MCF 10A (cell line): ENCODE measurements at regions of chr7 and their contacts with region 1.

Region 1: DNA sequence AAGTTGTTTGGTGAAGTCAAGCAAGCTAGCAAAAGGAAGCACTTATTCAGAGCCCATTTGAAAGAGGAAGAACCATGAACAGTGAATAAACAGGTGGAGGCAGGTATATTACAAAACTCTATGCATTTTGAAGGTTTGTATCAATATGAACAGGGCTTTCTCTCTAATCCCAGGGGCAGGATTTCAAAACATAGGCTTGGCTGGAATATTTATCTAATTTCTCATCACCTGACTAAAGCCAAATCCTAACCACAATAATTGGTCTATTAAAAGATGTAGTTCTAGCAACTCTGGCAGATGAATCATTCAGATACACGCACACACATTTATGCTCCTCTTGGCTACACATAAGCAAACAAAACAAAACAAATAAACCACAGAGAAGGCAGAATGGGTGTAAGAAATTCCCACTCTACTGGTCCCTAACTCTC is 554.4 kb downstream of the INHBA start:
- DNase-seq: peak; percentile 94
- H3K4me3 Mint-ChIP-seq: no peak overlapping the region
- H3K27ac Mint-ChIP-seq: peak overlapping the region; percentile 99
- H3K4me1 Mint-ChIP-seq: peaks cover 35% of the 10 kb centered on the region
- H3K27me3 Mint-ChIP-seq: no peaks in the 10 kb centered on the region
- CTCF ChIP-seq: no peak

Region 2: DNA sequence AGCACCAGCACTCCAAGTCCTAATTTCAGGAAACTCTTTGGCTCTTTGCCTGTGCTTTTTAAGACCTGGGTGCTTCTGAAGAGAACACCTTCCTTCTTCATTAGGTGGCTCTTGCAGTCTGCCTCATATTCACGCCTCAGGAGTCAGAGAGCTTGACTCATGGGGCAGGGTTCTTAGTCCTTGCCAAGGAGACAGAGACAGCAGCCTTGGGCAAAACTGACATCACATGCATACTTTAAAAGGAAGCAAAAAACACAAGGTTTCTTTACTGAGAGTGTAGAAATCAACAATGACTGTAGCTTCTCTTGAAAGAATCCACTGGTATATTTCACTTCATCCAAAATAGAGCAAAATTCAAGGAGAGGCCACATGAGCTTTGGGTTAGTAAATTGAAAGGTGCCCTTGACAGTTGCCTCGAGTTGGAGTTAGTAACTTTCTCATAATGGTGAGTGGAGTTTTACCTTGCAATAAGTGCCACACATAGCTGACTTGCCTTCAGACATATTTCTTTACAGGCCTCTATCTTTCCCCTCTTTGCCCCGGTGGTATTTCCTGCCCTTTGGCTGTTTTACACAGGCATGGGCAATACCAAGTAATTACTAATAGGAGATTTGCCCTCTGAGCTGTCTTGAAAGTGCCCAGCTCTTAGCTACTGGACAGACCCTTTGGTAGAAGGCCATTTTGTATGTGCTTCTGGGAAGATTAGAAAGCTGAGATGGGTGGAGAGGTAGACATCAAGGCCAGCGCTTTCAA is 226.0 kb before region 1 on chr7:
- CTCF ChIA-PET with region 1: no interaction called
- POLR2A ChIA-PET with region 1: interaction called, 5 read pairs
- intact Hi-C with region 1: loop called (anchors 1 kb)
- DNase-seq: peak; percentile 95
- H3K4me3 Mint-ChIP-seq: no peak overlapping the region
- H3K27ac Mint-ChIP-seq: peak overlapping the region; percentile 92
- H3K4me1 Mint-ChIP-seq: peaks cover 51% of the 10 kb centered on the region
- H3K27me3 Mint-ChIP-seq: no peaks in the 10 kb centered on the region
- CTCF ChIP-seq: no peak

Region 3: GRCh38 chr7:41003031-41003925 is 145.3 kb before region 1 on chr7:
- CTCF ChIA-PET with region 1: interaction called, 5 read pairs
- POLR2A ChIA-PET with region 1: interaction called, 9 read pairs
- intact Hi-C with region 1: loop called (anchors 10 kb)
- DNase-seq: peak; percentile 64
- H3K4me3 Mint-ChIP-seq: no peak overlapping the region
- H3K27ac Mint-ChIP-seq: peak overlapping the region; percentile 25
- H3K4me1 Mint-ChIP-seq: peaks cover 42% of the 10 kb centered on the region
- H3K27me3 Mint-ChIP-seq: no peaks in the 10 kb centered on the region
- CTCF ChIP-seq: peak; percentile 73

Region 4: GRCh38 chr7:41107668-41108448 is 40.7 kb before region 1 on chr7:
- CTCF ChIA-PET with region 1: no interaction called
- POLR2A ChIA-PET with region 1: interaction called, 10 read pairs
- intact Hi-C with region 1: loop called (anchors 1 kb)
- DNase-seq: peak; percentile 93
- H3K4me3 Mint-ChIP-seq: peak overlapping the region; percentile 48
- H3K27ac Mint-ChIP-seq: peak overlapping the region; percentile 52
- H3K4me1 Mint-ChIP-seq: peaks cover 45% of the 10 kb centered on the region
- H3K27me3 Mint-ChIP-seq: no peaks in the 10 kb centered on the region
- CTCF ChIP-seq: no peak

Region 5: GRCh38 chr7:41205600-41205999 is 57.1 kb after region 1 on chr7:
- CTCF ChIA-PET with region 1: no interaction called
- POLR2A ChIA-PET with region 1: no interaction called
- intact Hi-C with region 1: no loop called
- DNase-seq: no peak
- H3K4me3 Mint-ChIP-seq: no peak overlapping the region
- H3K27ac Mint-ChIP-seq: no peak overlapping the region
- H3K4me1 Mint-ChIP-seq: no peaks in the 10 kb centered on the region
- H3K27me3 Mint-ChIP-seq: no peaks in the 10 kb centered on the region
- CTCF ChIP-seq: no peak

Region 6: DNA sequence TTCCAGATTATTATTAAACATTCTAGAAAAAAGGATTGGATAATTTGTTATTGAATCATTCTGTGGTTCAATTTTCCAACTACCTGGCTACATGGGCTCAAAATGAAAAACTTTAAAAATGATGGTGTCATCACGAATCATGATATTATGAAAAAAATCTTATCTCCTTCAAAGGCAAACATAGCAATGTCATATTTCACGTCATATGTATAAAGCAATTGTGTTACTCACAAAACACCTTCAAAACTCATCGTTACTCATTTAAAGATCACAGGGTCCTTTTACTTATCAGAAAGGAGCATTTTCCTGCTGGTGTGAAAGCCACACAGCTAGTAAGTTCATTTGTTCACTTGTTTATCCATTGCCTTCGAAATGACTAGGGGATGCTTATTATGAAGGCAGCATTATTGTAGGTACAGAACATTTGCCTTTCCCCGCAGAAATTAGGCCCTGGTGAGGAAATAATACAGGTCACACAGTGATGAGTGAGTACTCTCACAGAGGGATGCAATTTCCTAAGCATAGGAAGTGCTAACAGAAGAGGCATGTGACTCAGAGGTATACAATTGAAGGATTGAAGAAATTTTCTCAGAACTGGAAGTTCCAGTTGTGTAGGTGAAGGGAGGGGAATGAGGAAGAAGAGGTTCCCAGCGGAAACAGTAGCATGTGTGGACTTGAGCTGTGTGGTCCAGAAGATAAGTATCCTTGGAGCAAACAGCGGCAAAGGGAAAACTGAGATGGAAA is 75.7 kb after region 1 on chr7:
- CTCF ChIA-PET with region 1: no interaction called
- POLR2A ChIA-PET with region 1: interaction called, 3 read pairs
- intact Hi-C with region 1: loop called (anchors 2 kb)
- DNase-seq: peak; percentile 80
- H3K4me3 Mint-ChIP-seq: no peak overlapping the region
- H3K27ac Mint-ChIP-seq: no peak overlapping the region
- H3K4me1 Mint-ChIP-seq: peaks cover 15% of the 10 kb centered on the region
- H3K27me3 Mint-ChIP-seq: no peaks in the 10 kb centered on the region
- CTCF ChIP-seq: no peak

Region 7: DNA sequence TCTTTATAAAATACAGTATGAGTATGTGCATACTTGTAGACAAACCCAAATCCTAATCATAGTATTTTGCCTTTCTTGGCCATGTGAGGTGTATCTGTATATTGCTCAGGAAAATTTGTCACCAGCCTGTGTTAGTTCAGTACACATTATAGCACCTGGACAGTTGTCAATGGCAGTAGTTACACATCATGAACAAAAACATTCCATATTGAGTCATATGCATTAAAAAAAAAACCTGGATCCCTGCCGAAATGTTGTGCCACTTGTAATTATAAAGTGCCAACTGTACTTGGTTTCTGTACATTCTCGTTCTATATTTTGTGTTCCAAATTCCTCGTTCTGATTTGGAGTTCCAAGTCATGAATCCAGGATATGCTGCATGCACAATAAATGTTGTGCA is 144.0 kb after region 1 on chr7:
- CTCF ChIA-PET with region 1: no interaction called
- POLR2A ChIA-PET with region 1: no interaction called
- intact Hi-C with region 1: loop called (anchors 10 kb)
- DNase-seq: peak; percentile 90
- H3K4me3 Mint-ChIP-seq: no peak overlapping the region
- H3K27ac Mint-ChIP-seq: no peak overlapping the region
- H3K4me1 Mint-ChIP-seq: peaks cover 13% of the 10 kb centered on the region
- H3K27me3 Mint-ChIP-seq: no peaks in the 10 kb centered on the region
- CTCF ChIP-seq: no peak

Region 8: DNA sequence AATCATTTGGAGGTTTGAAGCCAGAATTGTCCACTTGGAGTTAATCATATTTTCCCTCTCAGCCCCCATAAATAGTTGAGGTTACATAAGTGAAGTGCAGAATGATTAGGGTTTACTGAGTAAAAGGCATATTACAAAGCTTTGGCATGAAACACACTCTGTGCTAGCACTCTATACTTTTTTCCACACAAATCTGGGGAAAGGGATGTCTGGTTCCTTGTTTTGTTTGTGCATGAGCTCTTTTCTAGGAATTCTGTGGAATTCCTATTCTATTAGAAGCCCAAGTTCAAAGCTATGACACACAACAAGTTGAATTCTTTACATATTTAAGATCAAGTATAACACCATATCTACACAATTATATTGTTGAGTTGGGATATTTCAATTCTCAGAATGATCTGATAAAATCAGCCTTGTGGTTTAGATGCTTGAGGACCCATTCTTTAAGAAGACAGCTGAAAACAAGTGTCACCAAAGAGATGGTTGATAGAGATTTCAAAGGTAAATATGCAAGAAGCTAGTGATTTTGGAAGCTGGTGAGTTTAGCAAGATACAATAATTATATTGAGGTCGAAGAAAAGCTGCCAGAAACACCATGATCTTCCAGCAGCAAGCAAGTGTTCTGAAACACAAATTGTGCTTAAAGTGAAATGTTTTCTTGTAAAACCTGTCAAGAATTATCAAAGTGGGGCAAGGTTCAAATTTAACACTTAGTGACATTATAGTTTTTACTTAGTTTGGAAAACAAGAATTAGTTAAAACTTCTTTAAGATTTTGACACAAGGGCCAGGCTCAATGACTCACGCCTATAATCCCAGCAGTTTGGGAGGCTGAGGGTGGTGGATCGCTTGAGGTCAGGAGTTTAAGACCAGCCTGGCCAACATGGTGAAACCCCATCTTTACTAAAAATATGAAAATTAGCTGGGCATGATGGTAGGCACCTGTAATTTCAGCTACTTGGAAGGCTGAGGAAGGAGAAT is 431.7 kb after region 1 on chr7:
- CTCF ChIA-PET with region 1: no interaction called
- POLR2A ChIA-PET with region 1: no interaction called
- intact Hi-C with region 1: loop called (anchors 10 kb)
- DNase-seq: peak; percentile 5
- H3K4me3 Mint-ChIP-seq: no peak overlapping the region
- H3K27ac Mint-ChIP-seq: no peak overlapping the region
- H3K4me1 Mint-ChIP-seq: no peaks in the 10 kb centered on the region
- H3K27me3 Mint-ChIP-seq: no peaks in the 10 kb centered on the region
- CTCF ChIP-seq: no peak

Region 9: GRCh38 chr7:41612798-41613197 is 464.3 kb after region 1 on chr7:
- CTCF ChIA-PET with region 1: no interaction called
- POLR2A ChIA-PET with region 1: no interaction called
- intact Hi-C with region 1: no loop called
- DNase-seq: no peak
- H3K4me3 Mint-ChIP-seq: no peak overlapping the region
- H3K27ac Mint-ChIP-seq: no peak overlapping the region
- H3K4me1 Mint-ChIP-seq: no peaks in the 10 kb centered on the region
- H3K27me3 Mint-ChIP-seq: no peaks in the 10 kb centered on the region
- CTCF ChIP-seq: no peak